Lower leg skin (tissue), 4 donors: ENCODE measurements at regions of chr3 and their contacts with region 1.

Region 1: GRCh38 chr3:137970914-137971831 is 38.8 kb upstream of the CLDN18 start:
- DNase-seq: peak; percentile 51 to 94
- H3K4me3 ChIP-seq: no peak overlapping the region
- CTCF ChIP-seq: no peak
- POLR2A ChIP-seq: no peak

Region 2: GRCh38 chr3:137032465-137033120 is 938.6 kb before region 1 on chr3:
- intact Hi-C with region 1: loop called (anchors 5 kb)
- DNase-seq: peak; percentile 80 to 98
- H3K4me3 ChIP-seq: no peak overlapping the region
- CTCF ChIP-seq: peak in 1 of 3 donors; percentile 74
- POLR2A ChIP-seq: no peak

Region 3: DNA sequence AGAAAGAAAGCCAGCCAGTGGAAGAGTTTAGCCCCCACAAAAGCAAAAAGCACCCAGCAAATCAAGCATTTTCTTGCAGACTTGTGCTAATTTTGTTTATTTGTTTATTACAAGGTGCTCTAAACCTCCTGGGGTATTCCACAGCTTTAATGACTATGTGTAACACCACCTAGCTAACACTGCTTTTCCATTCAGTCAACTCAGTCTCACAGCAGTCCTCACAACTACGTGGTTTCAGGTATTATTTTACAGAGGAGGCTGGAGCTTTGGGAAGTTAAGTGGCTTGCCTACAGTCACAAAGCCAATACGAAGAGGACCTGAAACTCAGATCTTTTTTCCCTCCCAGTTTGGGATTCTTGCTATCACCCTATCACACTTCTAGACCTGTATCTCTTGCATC is 192.2 kb before region 1 on chr3:
- intact Hi-C with region 1: no loop called
- DNase-seq: no peak
- H3K4me3 ChIP-seq: no peak overlapping the region
- CTCF ChIP-seq: no peak
- POLR2A ChIP-seq: no peak

Region 4: GRCh38 chr3:138114988-138115971 is 144.1 kb after region 1 on chr3 and contains the start of gene DZIP1L:
- intact Hi-C with region 1: no loop called
- DNase-seq: peak; percentile 39 to 90
- H3K4me3 ChIP-seq: peak within 1 kb of the TSS; percentile 71
- CTCF ChIP-seq: no peak
- POLR2A ChIP-seq: no peak
- total RNA-seq, gene DZIP1L: 10.9 to 45.0 (median 16.4) TPM